Sigmoid colon (tissue), 7 donors: ENCODE measurements at regions of chr18 and their contacts with region 1.

Region 1: GRCh38 chr18:9684881-9685614 is 23.1 kb upstream of the RAB31 start:
- DNase-seq: no peak
- H3K4me3 ChIP-seq: no peak overlapping the region
- H3K27ac ChIP-seq: peak overlapping the region; percentile 23 to 58 (median 47)
- H3K4me1 ChIP-seq: peaks cover 0 to 25% (median 17%) of the 10 kb centered on the region in 4 donors
- H3K27me3 ChIP-seq: no peaks in the 10 kb centered on the region
- CTCF ChIP-seq: no peak
- EP300 ChIP-seq: no peak
- POLR2A ChIP-seq: no peak

Region 2: DNA sequence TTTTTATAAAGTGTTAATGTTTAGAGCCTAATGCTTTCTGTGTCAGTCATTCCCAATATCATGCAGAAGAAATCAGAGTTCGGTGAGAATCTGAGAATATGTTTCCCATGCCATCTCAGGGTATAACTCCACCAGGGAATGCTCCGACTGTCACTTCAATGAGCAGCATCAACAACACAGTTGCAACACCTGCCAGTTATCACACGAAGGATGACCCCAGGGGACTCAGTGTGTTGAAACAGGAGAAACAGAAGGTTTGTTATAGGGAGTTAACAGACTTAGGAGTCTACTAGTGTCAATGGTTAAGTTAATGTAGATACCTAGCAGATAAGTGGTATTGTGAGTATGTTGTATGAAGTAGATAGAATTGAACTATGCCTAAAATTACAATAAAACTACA is 259.8 kb after region 1 on chr18:
- intact Hi-C with region 1: loop called (anchors 5 kb)
- DNase-seq: no peak
- H3K4me3 ChIP-seq: no peak overlapping the region
- H3K27ac ChIP-seq: no peak overlapping the region
- H3K4me1 ChIP-seq: peaks cover 0 to 1% (median 0%) of the 10 kb centered on the region in 4 donors
- H3K27me3 ChIP-seq: no peaks in the 10 kb centered on the region
- CTCF ChIP-seq: no peak
- EP300 ChIP-seq: no peak
- POLR2A ChIP-seq: no peak